ENCODE measurements at regions of chr19 and their contacts with region 1.

Region 1: GRCh38 chr19:56838909-56839651 is 1.4 kb downstream of the PEG3 start:
- DNase-seq: peak; percentile 100
- H3K4me3 ChIP-seq: peak overlapping the region in 3 of 4 donors; percentile 49 to 63 (median 62)
- H3K27ac ChIP-seq: peak overlapping the region; percentile 88 to 92 (median 90)
- H3K4me1 ChIP-seq: peaks cover 0 to 12% (median 2%) of the 10 kb centered on the region in 4 donors
- H3K27me3 ChIP-seq: no peaks in the 10 kb centered on the region
- CTCF ChIP-seq: no peak
- EP300 ChIP-seq: no peak
- POLR2A ChIP-seq: no peak

Region 2: GRCh38 chr19:56748378-56748777 is 90.7 kb before region 1 on chr19:
- intact Hi-C with region 1: loop called (anchors 1 kb)
- DNase-seq: no peak
- H3K4me3 ChIP-seq: no peak overlapping the region
- H3K27ac ChIP-seq: no peak overlapping the region
- H3K4me1 ChIP-seq: peaks cover 0 to 8% (median 0%) of the 10 kb centered on the region in 4 donors
- H3K27me3 ChIP-seq: no peaks in the 10 kb centered on the region
- CTCF ChIP-seq: peak; percentile 35 to 59 (median 49)
- EP300 ChIP-seq: no peak
- POLR2A ChIP-seq: no peak

Region 3: DNA sequence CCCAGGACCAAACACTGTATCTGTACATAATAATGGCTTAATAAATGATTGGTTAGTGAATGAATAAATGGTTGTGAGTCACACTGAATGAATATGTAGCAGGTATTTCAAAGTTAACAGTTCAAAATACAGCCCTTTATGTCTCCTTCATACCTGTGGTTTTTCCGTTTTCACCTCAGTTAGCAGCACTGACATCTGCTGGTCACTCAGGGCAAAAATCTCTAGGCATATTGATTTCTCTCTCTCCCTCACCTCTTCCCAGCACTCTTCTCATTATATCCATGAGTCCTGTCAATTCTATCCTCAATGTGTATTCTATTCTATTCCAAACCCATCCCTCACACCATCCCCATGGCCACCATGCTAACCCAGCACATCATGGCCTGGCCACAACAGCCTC is 74.8 kb before region 1 on chr19:
- intact Hi-C with region 1: loop called (anchors 5 kb)
- DNase-seq: no peak
- H3K4me3 ChIP-seq: no peak overlapping the region
- H3K27ac ChIP-seq: no peak overlapping the region
- H3K4me1 ChIP-seq: peaks cover 0 to 4% (median 4%) of the 10 kb centered on the region in 4 donors
- H3K27me3 ChIP-seq: no peaks in the 10 kb centered on the region
- CTCF ChIP-seq: no peak
- EP300 ChIP-seq: no peak
- POLR2A ChIP-seq: no peak

Region 4: GRCh38 chr19:56821209-56821608 is 17.9 kb before region 1 on chr19:
- intact Hi-C with region 1: no loop called
- DNase-seq: no peak
- H3K4me3 ChIP-seq: no peak overlapping the region
- H3K27ac ChIP-seq: no peak overlapping the region
- H3K4me1 ChIP-seq: no peaks in the 10 kb centered on the region
- H3K27me3 ChIP-seq: no peaks in the 10 kb centered on the region
- CTCF ChIP-seq: no peak
- EP300 ChIP-seq: no peak
- POLR2A ChIP-seq: no peak

Region 5: DNA sequence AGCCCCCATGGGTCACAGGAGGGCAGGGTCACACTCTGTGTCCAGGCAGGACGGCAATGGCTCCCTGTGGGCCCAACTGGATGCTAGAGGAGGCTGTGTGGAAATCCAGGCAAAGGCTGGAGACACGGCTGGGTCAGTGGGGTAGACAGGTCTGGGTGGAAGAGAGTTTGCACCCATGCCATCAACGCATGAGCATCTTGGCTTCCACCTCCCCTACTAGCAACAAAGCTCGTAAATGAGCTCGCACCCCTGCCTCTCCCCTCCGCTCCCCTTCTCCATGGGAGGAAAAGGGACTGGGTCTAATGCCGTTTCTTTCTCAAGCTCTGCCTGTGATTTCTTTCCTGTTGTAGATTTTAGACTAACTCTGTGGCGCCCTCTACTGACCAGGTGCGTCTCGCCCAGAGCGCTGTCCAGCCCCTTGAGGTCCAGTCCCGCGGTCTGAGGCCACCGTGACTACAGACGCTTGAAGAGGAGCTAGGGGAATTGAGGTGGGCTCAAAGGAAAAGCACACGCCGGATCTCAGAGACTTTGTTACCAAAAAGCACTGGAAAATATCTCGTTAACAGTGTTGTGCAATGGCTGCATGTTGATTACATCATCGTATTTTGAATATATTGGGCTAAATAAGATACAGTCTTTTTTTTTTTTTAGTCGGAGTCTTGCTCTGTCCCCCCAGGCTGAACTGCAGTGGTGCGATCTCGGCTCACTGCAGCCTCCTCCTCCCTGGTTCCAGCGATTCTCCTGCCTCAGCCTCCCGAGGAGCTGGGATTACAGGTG is 230.0 kb after region 1 on chr19:
- intact Hi-C with region 1: loop called (anchors 5 kb)
- DNase-seq: peak; percentile 73
- H3K4me3 ChIP-seq: no peak overlapping the region
- H3K27ac ChIP-seq: no peak overlapping the region
- H3K4me1 ChIP-seq: no peaks in the 10 kb centered on the region
- H3K27me3 ChIP-seq: no peaks in the 10 kb centered on the region
- CTCF ChIP-seq: peak in 3 of 4 experiments; percentile 18 to 48 (median 47)
- EP300 ChIP-seq: no peak
- POLR2A ChIP-seq: no peak

Region 6: GRCh38 chr19:57103573-57104277 is 264.6 kb after region 1 on chr19:
- intact Hi-C with region 1: loop called (anchors 5 kb)
- DNase-seq: peak; percentile 76
- H3K4me3 ChIP-seq: peak overlapping the region in 1 of 4 donors; percentile 28
- H3K27ac ChIP-seq: no peak overlapping the region
- H3K4me1 ChIP-seq: peaks cover 0 to 20% (median 11%) of the 10 kb centered on the region in 4 donors
- H3K27me3 ChIP-seq: peaks cover 12 to 38% (median 20%) of the 10 kb centered on the region in 3 donors
- CTCF ChIP-seq: peak; percentile 75 to 84 (median 80)
- EP300 ChIP-seq: no peak
- POLR2A ChIP-seq: no peak